ENCODE measurements at regions of chr11 and their contacts with region 1.

Region 1: DNA sequence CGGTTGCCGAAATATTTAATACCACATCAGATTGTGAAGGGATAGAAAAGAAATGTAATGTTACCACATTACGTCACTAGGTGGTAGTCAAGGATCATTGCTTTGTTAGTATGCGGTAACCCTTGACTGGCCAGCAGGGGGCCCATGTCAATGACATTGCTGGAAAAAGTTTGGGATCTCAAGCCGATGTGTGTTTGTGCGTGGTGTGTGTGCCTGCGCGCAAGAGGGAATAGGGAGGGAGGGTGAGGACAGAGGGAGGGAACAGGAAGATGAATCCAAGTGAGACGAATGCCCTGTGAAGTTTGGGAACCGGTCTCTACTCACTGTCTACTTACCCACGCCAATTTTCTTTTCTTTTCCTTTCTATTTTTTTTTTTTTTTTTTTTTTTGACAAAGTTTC is 10.7 kb upstream of the MRGPRX2 start:
- DNase-seq: peak; percentile 77
- ATAC-seq: peak; percentile 98
- H3K4me3 ChIP-seq: 0 out of 4 replicates have a peak overlapping the region, but pooled peaks of 1 of the 2 experiments have one; percentile 15
- H3K27ac ChIP-seq: no peak overlapping the region
- H3K4me1 ChIP-seq: peaks cover 0 to 5% of the 10 kb centered on the region in 2 experiments; a peak in 2 of 4 replicates
- H3K27me3 ChIP-seq: no peaks in the 10 kb centered on the region
- CTCF ChIP-seq: peak; percentile 92 to 100 (median 99)
- POLR2A ChIP-seq: no peak
- RAD21 ChIP-seq: peak; percentile 99

Region 2: GRCh38 chr11:18912883-18913282 is 158.4 kb before region 1 on chr11:
- CTCF ChIA-PET with region 1: no interaction called
- POLR2A ChIA-PET with region 1: no interaction called
- RAD21 ChIA-PET with region 1: no interaction called
- intact Hi-C with region 1: no loop called
- DNase-seq: no peak
- ATAC-seq: no peak
- H3K4me3 ChIP-seq: no peak overlapping the region
- H3K27ac ChIP-seq: no peak overlapping the region
- H3K4me1 ChIP-seq: no peaks in the 10 kb centered on the region
- H3K27me3 ChIP-seq: peaks cover 62% of the 10 kb centered on the region
- CTCF ChIP-seq: no peak
- POLR2A ChIP-seq: no peak
- RAD21 ChIP-seq: no peak

Region 3: GRCh38 chr11:19259487-19260345 is 188.5 kb after region 1 on chr11:
- CTCF ChIA-PET with region 1: interaction called, 4 read pairs
- POLR2A ChIA-PET with region 1: no interaction called
- RAD21 ChIA-PET with region 1: no interaction called
- intact Hi-C with region 1: loop called (anchors 5 kb)
- DNase-seq: peak; percentile 24
- ATAC-seq: peak; percentile 88
- H3K4me3 ChIP-seq: peak overlapping the region in 1 of 2 experiments; percentile 8; a peak in 1 of 4 replicates
- H3K27ac ChIP-seq: no peak overlapping the region
- H3K4me1 ChIP-seq: no peaks in the 10 kb centered on the region
- H3K27me3 ChIP-seq: no peaks in the 10 kb centered on the region
- CTCF ChIP-seq: peak; percentile 71 to 95 (median 90); a peak in 5 of 6 replicates
- POLR2A ChIP-seq: no peak
- RAD21 ChIP-seq: peak; percentile 70

Region 4: GRCh38 chr11:19553683-19554333 is 482.6 kb after region 1 on chr11:
- CTCF ChIA-PET with region 1: interaction called, 97 read pairs
- POLR2A ChIA-PET with region 1: no interaction called
- RAD21 ChIA-PET with region 1: interaction called in 1 of 2 experiments, 3 read pairs
- intact Hi-C with region 1: loop called (anchors 1 kb)
- DNase-seq: peak; percentile 58
- ATAC-seq: peak; percentile 81
- H3K4me3 ChIP-seq: no peak overlapping the region
- H3K27ac ChIP-seq: no peak overlapping the region
- H3K4me1 ChIP-seq: no peaks in the 10 kb centered on the region
- H3K27me3 ChIP-seq: peaks cover 5% of the 10 kb centered on the region; the same call in 1 of the 2 replicates
- CTCF ChIP-seq: peak; percentile 81 to 97 (median 91)
- POLR2A ChIP-seq: no peak
- RAD21 ChIP-seq: peak; percentile 96

Region 5: GRCh38 chr11:19903620-19904069 is 832.4 kb after region 1 on chr11:
- CTCF ChIA-PET with region 1: interaction called, 7 read pairs
- POLR2A ChIA-PET with region 1: no interaction called
- RAD21 ChIA-PET with region 1: no interaction called
- intact Hi-C with region 1: loop called (anchors 2 kb)
- DNase-seq: peak; percentile 62
- ATAC-seq: peak; percentile 90
- H3K4me3 ChIP-seq: no peak overlapping the region
- H3K27ac ChIP-seq: no peak overlapping the region
- H3K4me1 ChIP-seq: peaks cover 3 to 4% of the 10 kb centered on the region in 2 experiments; a peak in 3 of 4 replicates
- H3K27me3 ChIP-seq: no peaks in the 10 kb centered on the region
- CTCF ChIP-seq: peak; percentile 73 to 85 (median 76); a peak in 5 of 6 replicates
- POLR2A ChIP-seq: no peak
- RAD21 ChIP-seq: peak; percentile 85

Region 6: GRCh38 chr11:20337526-20338154 is 1266.4 kb after region 1 on chr11:
- CTCF ChIA-PET with region 1: no interaction called
- POLR2A ChIA-PET with region 1: no interaction called
- RAD21 ChIA-PET with region 1: no interaction called
- intact Hi-C with region 1: loop called (anchors 10 kb)
- DNase-seq: peak; percentile 27
- ATAC-seq: peak; percentile 90
- H3K4me3 ChIP-seq: no peak overlapping the region
- H3K27ac ChIP-seq: no peak overlapping the region
- H3K4me1 ChIP-seq: no peaks in the 10 kb centered on the region
- H3K27me3 ChIP-seq: peaks cover 85% of the 10 kb centered on the region
- CTCF ChIP-seq: peak; percentile 47 to 63 (median 51); a peak in 5 of 6 replicates
- POLR2A ChIP-seq: no peak
- RAD21 ChIP-seq: peak; percentile 56